ENCODE measurements at regions of chr11 and their contacts with region 1.

Region 1: DNA sequence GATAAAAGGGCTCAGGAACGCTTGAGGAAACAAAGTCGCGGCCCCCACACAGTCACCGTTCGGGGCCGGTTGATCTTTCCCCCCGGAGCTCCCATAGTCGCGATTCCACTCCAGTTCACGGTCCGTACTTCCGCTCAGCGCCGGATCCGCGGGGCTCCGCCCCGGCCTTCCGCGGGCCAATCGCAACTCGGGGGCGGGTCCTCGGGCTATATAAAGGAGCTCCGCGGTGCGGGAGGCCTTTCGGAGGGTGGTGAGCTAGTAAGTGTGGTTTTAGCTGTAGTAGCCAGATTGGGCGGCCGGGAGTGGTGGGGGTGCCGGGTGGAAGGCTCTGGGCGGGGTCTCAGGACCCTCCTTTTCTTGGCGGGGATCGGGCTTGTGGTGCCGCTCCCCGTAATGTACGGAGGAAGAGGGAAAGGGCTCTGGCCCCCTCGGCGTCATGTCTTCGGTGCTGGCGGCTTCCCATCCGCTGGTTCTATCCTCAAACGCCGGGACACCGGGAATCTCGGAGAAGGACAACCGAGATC is at the starts of genes C11orf98 and CSKMT:
- DNase-seq: peak; percentile 97
- ATAC-seq: peak; percentile 91
- H3K4me3 Mint-ChIP-seq: peak within 1 kb of the TSS; percentile 97
- H3K27ac Mint-ChIP-seq: peak within 1 kb of the TSS; percentile 95
- H3K4me1 Mint-ChIP-seq: peaks cover 40% of the 10 kb centered on the region
- H3K27me3 Mint-ChIP-seq: no peaks in the 10 kb centered on the region
- total RNA-seq, gene C11orf98: 130 to 131 TPM
- total RNA-seq, gene CSKMT: 23.7 to 31.0 TPM

Region 2: GRCh38 chr11:62612366-62613290 is 52.5 kb before region 1 on chr11 and contains the starts of genes EML3 and ROM1:
- CTCF ChIA-PET with region 1: interaction called, 13 read pairs
- DNase-seq: peak; percentile 95
- ATAC-seq: peak; percentile 83
- H3K4me3 Mint-ChIP-seq: peak within 1 kb of the TSS; percentile 100
- H3K27ac Mint-ChIP-seq: peak within 1 kb of the TSS; percentile 99
- H3K4me1 Mint-ChIP-seq: peaks cover 48% of the 10 kb centered on the region
- H3K27me3 Mint-ChIP-seq: no peaks in the 10 kb centered on the region
- total RNA-seq, gene EML3: 132 to 133 TPM
- total RNA-seq, gene ROM1: 1.1 to 1.5 TPM

Region 3: GRCh38 chr11:62652161-62653006 is 12.8 kb before region 1 on chr11:
- CTCF ChIA-PET with region 1: interaction called, 21 read pairs
- DNase-seq: no peak
- ATAC-seq: peak; percentile 2
- H3K4me3 Mint-ChIP-seq: peak overlapping the region; percentile 86
- H3K27ac Mint-ChIP-seq: peak overlapping the region; percentile 85
- H3K4me1 Mint-ChIP-seq: peaks cover 35% of the 10 kb centered on the region
- H3K27me3 Mint-ChIP-seq: no peaks in the 10 kb centered on the region